Naive thymus-derived CD4-positive, alpha-beta T cell (primary cell): ENCODE measurements at regions of chr7 and their contacts with region 1.

Region 1: GRCh38 chr7:99386584-99387238 is 12.2 kb downstream of the ARPC1B start:
- DNase-seq: peak in 6 of 9 donors; percentile 30 to 59 (median 51)
- ATAC-seq: peak; percentile 83
- H3K4me3 ChIP-seq: no peak overlapping the region
- H3K4me3 Mint-ChIP-seq: peak overlapping the region in 1 of 10 donors; percentile 29
- H3K27ac ChIP-seq: peak overlapping the region; percentile 22
- H3K27ac Mint-ChIP-seq: peak overlapping the region in 8 of 9 donors; percentile 42 to 92 (median 76)
- H3K4me1 ChIP-seq: peaks cover 4 to 11% of the 10 kb centered on the region in 2 donors
- H3K4me1 Mint-ChIP-seq: peaks cover 5 to 25% (median 20%) of the 10 kb centered on the region in 7 donors
- H3K27me3 ChIP-seq: no peaks in the 10 kb centered on the region
- H3K27me3 Mint-ChIP-seq: no peaks in the 10 kb centered on the region

Region 2: GRCh38 chr7:99364961-99365817 is 21.5 kb before region 1 on chr7:
- CTCF ChIA-PET with region 1: interaction called, 21 read pairs
- POLR2A ChIA-PET with region 1: no interaction called
- intact Hi-C with region 1: loop called (anchors 1 kb)
- DNase-seq: peak; percentile 49 to 77 (median 64)
- ATAC-seq: peak; percentile 97
- H3K4me3 ChIP-seq: no peak overlapping the region
- H3K4me3 Mint-ChIP-seq: no peak overlapping the region
- H3K27ac ChIP-seq: no peak overlapping the region
- H3K27ac Mint-ChIP-seq: peak overlapping the region in 4 of 9 donors; percentile 19 to 81 (median 22)
- H3K4me1 ChIP-seq: no peaks in the 10 kb centered on the region
- H3K4me1 Mint-ChIP-seq: peaks cover 0 to 10% (median 0%) of the 10 kb centered on the region in 7 donors
- H3K27me3 ChIP-seq: no peaks in the 10 kb centered on the region
- H3K27me3 Mint-ChIP-seq: no peaks in the 10 kb centered on the region

Region 3: GRCh38 chr7:99374103-99375064 is 12.3 kb before region 1 on chr7 and contains the start of gene ARPC1B:
- CTCF ChIA-PET with region 1: no interaction called
- POLR2A ChIA-PET with region 1: interaction called, 42 read pairs
- intact Hi-C with region 1: no loop called
- DNase-seq: peak; percentile 67 to 86 (median 76)
- ATAC-seq: peak; percentile 82
- H3K4me3 ChIP-seq: peak within 1 kb of the TSS; percentile 83
- H3K4me3 Mint-ChIP-seq: peak within 1 kb of the TSS; percentile 71 to 90 (median 82)
- H3K27ac ChIP-seq: peak within 1 kb of the TSS; percentile 95
- H3K27ac Mint-ChIP-seq: peak within 1 kb of the TSS; percentile 76 to 99 (median 94)
- H3K4me1 ChIP-seq: peaks cover 18 to 35% of the 10 kb centered on the region in 2 donors
- H3K4me1 Mint-ChIP-seq: peaks cover 6 to 36% (median 32%) of the 10 kb centered on the region in 7 donors
- H3K27me3 ChIP-seq: no peaks in the 10 kb centered on the region
- H3K27me3 Mint-ChIP-seq: no peaks in the 10 kb centered on the region
- total RNA-seq, gene ARPC1B: 88.1 to 364 (median 141) TPM